ENCODE measurements at regions of chr5 and their contacts with region 1.

Region 1: DNA sequence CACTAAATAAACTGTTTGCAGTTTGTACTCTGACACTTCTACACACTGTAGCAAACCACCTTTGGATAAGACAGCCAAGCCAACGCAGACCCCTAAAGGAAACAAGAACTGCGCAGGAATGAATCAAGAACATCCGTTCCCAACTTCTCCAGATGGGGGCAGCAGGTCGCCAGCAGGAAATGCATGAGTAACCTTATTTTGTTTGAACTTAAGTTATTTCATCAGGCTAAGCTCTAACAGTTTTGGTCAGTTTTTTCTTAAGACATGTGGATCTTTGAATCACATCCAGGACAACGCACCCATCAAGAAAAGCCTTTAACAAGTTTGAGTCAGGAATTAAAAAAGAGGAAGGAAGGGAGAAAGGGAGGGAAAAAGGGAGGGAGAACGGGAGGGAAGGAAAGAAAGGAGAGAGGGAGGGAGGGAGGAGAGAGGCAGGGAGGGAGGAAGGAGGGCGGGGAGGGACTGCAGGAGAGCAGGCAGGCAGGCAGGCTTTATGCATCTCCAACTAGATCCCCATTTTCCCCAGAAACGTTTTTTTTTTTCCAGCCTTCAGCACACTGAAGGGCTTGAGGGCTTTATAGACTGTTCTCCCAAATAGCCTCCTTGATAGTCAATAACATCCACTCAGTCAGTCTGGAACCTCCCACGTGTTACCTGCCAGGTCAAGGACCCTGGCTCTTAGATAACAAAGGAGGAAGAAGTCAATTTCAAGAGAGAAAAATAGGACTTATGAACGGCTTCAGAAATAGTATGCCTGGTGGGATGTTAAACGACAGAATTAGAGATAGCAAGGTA is 22.2 kb downstream of the BHMT start:
- DNase-seq: peak; percentile 61
- ATAC-seq: peak; percentile 90

Region 2: GRCh38 chr5:79020861-79021561 is 112.8 kb before region 1 on chr5:
- intact Hi-C with region 1: loop called (anchors 2 kb)
- DNase-seq: peak; percentile 57
- ATAC-seq: peak; percentile 78

Region 3: DNA sequence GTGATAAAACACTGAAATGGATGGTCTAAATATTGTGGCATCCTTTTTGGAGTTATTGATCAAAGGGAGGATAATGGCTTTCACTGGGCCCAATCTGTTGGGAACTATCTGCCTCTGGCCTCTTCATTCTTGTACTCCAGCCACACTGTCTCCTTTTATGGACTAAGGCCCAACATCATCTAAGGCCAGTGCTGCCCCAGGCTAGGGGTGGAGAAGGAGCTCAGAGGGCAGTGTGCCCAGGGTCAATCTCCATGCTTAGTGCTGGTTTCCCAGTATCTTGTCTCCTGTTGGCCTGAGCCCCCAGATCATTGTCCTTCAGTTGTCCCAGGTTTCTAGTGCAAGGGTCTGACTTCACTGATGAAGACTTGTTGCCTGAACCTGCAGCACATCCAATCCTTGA is 75.7 kb after region 1 on chr5:
- intact Hi-C with region 1: no loop called
- DNase-seq: no peak
- ATAC-seq: no peak

Region 4: DNA sequence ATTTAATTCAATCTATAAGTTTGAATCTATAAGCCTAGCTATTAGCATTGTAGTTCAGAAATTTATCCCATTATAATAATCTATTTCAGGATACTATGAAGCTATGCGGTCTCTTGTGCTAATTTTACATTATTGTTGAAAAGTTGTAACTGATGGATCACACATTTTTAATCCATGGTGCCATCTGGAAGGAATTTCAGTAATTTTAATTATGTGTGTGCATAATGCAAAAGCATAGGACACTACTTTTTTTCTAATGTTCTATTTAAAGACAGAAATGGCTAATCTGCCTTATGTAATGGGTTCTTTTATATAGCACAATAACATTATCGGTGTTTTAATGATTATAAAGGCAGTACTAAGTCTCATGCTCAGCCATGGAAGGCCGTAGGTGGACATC is 289.4 kb after region 1 on chr5:
- intact Hi-C with region 1: no loop called
- DNase-seq: no peak
- ATAC-seq: no peak

Region 5: DNA sequence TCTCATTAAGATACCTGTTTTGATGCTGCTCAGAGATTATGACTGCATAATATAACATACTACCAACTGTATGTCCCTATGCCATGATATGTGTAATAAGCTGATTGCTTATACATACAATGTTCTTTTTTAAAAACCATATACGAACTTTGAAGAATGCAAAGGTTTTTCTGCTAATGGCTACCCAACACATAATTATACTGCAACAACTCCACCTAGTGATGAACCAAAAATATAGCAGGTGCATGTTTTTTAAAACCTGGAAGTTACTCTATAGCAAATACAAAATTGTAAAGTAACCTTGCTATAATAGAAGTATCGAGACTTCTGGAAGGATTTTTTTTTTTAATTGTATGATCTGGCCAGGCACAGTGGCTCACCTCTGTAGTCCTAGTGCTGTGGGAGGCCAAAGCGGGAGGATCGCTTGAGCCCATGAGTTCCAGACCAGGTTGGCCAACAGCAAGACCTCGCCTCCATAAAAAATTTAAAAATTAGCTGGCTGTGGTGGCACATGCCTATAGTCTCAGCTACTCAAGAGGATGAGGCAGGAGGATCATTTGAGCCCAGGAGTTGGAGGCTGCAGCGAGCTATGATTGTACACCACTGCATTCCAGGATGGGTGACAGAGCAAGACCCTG is 331.0 kb after region 1 on chr5:
- intact Hi-C with region 1: loop called (anchors 5 kb)
- DNase-seq: no peak
- ATAC-seq: peak; percentile 60

Region 6: DNA sequence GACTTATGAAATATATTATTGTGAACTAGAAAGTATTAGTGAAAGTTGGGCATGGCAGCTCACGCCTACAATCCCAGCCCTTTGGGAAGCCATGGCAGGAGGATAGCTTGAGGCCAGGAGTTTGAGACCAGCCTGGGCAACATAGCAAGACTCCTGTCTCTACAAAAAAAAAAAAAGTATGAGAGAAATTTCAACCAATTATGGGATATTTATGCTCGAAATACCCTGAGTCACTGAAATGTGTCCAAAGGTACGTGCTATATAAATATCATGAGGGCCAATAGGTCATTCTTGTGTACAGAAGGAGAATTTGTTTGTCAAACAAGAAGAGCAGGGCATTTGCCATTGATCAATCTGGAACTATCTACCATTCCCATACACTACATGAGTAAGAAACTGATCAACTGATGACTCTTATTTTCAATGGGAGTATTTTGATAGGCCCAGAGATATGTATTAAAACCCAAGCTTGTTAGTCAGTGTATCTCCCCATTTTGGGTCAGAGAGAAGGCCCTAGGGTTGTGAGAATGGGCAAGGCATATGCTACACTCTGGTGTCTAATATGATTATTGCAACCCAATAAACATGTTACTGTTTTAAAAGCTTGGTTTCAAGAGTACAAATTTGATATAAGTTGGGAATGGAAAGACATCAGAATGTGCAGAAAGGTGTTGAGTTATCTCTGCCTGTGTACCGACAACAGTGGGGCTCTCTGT is 401.8 kb after region 1 on chr5:
- intact Hi-C with region 1: loop called (anchors 5 kb)
- DNase-seq: no peak
- ATAC-seq: peak; percentile 59

Measured in left ventricle myocardium superior (tissue), 1 donor.